ENCODE measurements at regions of chrX and their contacts with region 1.

Region 1: DNA sequence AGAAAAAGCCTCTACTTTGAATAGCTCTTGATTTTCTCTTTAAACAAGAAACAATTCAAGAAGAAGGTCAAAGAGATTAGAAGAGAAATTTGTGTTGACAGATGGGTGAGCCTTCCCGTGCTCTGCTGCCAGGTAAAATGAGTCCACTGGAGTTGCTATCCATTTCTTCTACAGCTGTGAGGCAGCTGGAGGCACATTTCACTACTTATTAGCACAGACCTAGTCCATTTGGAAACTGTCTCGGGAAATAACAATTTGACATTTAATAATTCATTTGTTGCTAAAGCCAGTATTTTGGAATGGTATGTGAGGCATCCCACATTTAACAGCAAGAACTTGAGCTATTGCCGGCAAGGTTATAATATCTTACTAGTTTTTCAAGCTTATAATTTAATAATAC is 396.8 kb upstream of the GRIA3 start:
- DNase-seq: no peak
- ATAC-seq: no peak
- H3K4me3 ChIP-seq: no peak overlapping the region
- H3K27ac ChIP-seq: no peak overlapping the region
- H3K4me1 ChIP-seq: no peaks in the 10 kb centered on the region
- H3K27me3 ChIP-seq: no peaks in the 10 kb centered on the region
- CTCF ChIP-seq: no peak
- EP300 ChIP-seq: no peak
- POLR2A ChIP-seq: no peak
- RAD21 ChIP-seq: no peak

Region 2: GRCh38 chrX:122770581-122770980 is 16.6 kb before region 1 on chrX:
- CTCF ChIA-PET with region 1: no interaction called
- POLR2A ChIA-PET with region 1: no interaction called
- in situ Hi-C with region 1: no loop called
- intact Hi-C with region 1: loop called (anchors 1 kb)
- DNase-seq: no peak
- ATAC-seq: no peak
- H3K4me3 ChIP-seq: no peak overlapping the region
- H3K27ac ChIP-seq: no peak overlapping the region
- H3K4me1 ChIP-seq: no peaks in the 10 kb centered on the region
- H3K27me3 ChIP-seq: no peaks in the 10 kb centered on the region
- CTCF ChIP-seq: no peak
- EP300 ChIP-seq: no peak
- POLR2A ChIP-seq: no peak
- RAD21 ChIP-seq: no peak

Region 3: DNA sequence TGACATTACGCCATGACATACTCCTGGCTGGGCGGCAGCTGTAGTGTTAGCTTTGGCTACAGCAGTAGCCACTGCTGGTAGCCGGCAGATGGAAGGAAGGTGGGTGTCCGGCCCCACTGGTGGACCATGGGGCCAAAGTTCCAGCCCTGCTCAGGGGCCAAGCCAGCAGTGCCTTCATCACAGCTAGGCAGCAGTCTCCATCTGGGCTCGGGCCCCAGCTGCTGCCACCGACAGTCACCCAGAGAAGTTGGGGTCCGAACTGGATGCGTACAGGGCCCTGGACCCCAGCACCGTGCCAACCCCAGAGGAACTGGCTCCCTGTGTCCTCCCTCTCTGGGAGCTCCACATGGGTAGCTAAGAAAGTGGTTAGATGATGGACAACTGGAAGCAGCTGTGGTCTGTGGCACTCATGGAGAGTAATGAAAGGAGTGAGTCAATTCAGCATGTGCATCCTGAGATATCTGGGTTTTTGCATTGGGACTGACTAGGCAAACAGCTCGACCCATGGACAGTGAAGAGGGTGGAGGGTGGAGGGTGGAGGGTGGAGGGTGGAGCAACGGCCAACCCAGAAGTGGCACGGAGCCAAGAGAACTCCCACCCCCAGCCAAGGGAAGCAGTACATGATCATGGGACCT is 30.2 kb after region 1 on chrX:
- CTCF ChIA-PET with region 1: no interaction called
- POLR2A ChIA-PET with region 1: no interaction called
- in situ Hi-C with region 1: no loop called
- intact Hi-C with region 1: no loop called
- DNase-seq: no peak
- ATAC-seq: no peak
- H3K4me3 ChIP-seq: no peak overlapping the region
- H3K27ac ChIP-seq: no peak overlapping the region
- H3K4me1 ChIP-seq: no peaks in the 10 kb centered on the region
- H3K27me3 ChIP-seq: no peaks in the 10 kb centered on the region
- CTCF ChIP-seq: no peak
- EP300 ChIP-seq: no peak
- POLR2A ChIP-seq: no peak
- RAD21 ChIP-seq: no peak

Region 4: GRCh38 chrX:122835886-122836285 is 48.7 kb after region 1 on chrX:
- CTCF ChIA-PET with region 1: no interaction called
- POLR2A ChIA-PET with region 1: no interaction called
- in situ Hi-C with region 1: no loop called
- intact Hi-C with region 1: no loop called
- DNase-seq: no peak
- ATAC-seq: no peak
- H3K4me3 ChIP-seq: no peak overlapping the region
- H3K27ac ChIP-seq: no peak overlapping the region
- H3K4me1 ChIP-seq: no peaks in the 10 kb centered on the region
- H3K27me3 ChIP-seq: no peaks in the 10 kb centered on the region
- CTCF ChIP-seq: no peak
- EP300 ChIP-seq: no peak
- POLR2A ChIP-seq: no peak
- RAD21 ChIP-seq: no peak